ENCODE measurements at regions of chr13 and their contacts with region 1.

Region 1: GRCh38 chr13:20197361-20197834 is 4.7 kb upstream of the GJB2 start:
- DNase-seq: no peak
- H3K4me3 ChIP-seq: no peak overlapping the region
- H3K27ac ChIP-seq: no peak overlapping the region
- H3K4me1 ChIP-seq: peaks cover 0 to 19% (median 18%) of the 10 kb centered on the region in 4 donors
- H3K27me3 ChIP-seq: peaks cover 34 to 48% (median 40%) of the 10 kb centered on the region in 3 donors
- CTCF ChIP-seq: peak in 3 of 4 experiments; percentile 4 to 53 (median 42)
- EP300 ChIP-seq: no peak
- POLR2A ChIP-seq: no peak

Region 2: GRCh38 chr13:20489185-20489820 is 291.9 kb after region 1 on chr13:
- intact Hi-C with region 1: loop called (anchors 10 kb)
- DNase-seq: no peak
- H3K4me3 ChIP-seq: no peak overlapping the region
- H3K27ac ChIP-seq: no peak overlapping the region
- H3K4me1 ChIP-seq: no peaks in the 10 kb centered on the region
- H3K27me3 ChIP-seq: no peaks in the 10 kb centered on the region
- CTCF ChIP-seq: no peak
- EP300 ChIP-seq: no peak
- POLR2A ChIP-seq: no peak